ENCODE measurements at regions of chr6 and their contacts with region 1.

Region 1: GRCh38 chr6:107033126-107033525 is 5.1 kb downstream of the MTRES1 start:
- DNase-seq: no peak
- H3K4me3 Mint-ChIP-seq: no peak overlapping the region
- H3K27ac Mint-ChIP-seq: peak overlapping the region; percentile 25
- H3K4me1 Mint-ChIP-seq: peaks cover 20% of the 10 kb centered on the region
- H3K27me3 Mint-ChIP-seq: no peaks in the 10 kb centered on the region

Region 2: GRCh38 chr6:106325336-106326178 is 707.6 kb before region 1 on chr6 and contains the start of gene ATG5:
- intact Hi-C with region 1: loop called (anchors 1 kb)
- DNase-seq: peak; percentile 100
- H3K4me3 Mint-ChIP-seq: peak within 1 kb of the TSS; percentile 100
- H3K27ac Mint-ChIP-seq: peak within 1 kb of the TSS; percentile 98
- H3K4me1 Mint-ChIP-seq: peaks cover 35% of the 10 kb centered on the region
- H3K27me3 Mint-ChIP-seq: peaks cover 22% of the 10 kb centered on the region
- total RNA-seq, gene ATG5: 36.0 and 36.7 TPM in 2 replicates

Region 3: GRCh38 chr6:106629103-106629858 is 403.8 kb before region 1 on chr6 and contains the starts of genes QRSL1 and RTN4IP1:
- intact Hi-C with region 1: loop called (anchors 1 kb)
- DNase-seq: peak; percentile 84
- H3K4me3 Mint-ChIP-seq: peak within 1 kb of the TSS; percentile 95
- H3K27ac Mint-ChIP-seq: peak within 1 kb of the TSS; percentile 98
- H3K4me1 Mint-ChIP-seq: peaks cover 33% of the 10 kb centered on the region
- H3K27me3 Mint-ChIP-seq: no peaks in the 10 kb centered on the region
- total RNA-seq, gene QRSL1: 18.6 and 21.9 TPM in 2 replicates
- total RNA-seq, gene RTN4IP1: 6.4 and 6.8 TPM in 2 replicates

Region 4: DNA sequence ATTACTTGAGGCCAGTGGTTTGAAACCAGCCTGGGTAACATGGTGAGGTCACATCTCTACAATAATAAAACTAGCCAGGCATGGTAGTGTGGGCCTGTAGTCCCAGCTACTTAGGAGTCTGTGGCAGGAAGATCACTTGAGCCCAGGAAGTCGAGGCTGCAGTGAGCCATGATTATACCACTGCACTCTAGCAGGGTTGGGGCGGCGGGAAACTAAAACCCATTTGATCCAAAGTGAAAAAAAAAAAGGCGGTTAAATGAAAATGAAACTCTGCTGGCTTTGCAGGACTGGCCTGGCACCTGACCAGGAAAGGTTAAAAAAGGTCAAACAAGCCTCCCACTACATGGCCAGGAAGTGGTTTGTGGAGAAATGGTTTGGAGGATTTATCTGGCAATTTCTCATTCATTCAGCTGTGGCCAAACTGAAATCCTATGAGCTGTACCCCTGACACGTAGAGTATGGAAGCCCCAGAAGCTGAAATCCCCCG is 31.5 kb after region 1 on chr6:
- intact Hi-C with region 1: loop called (anchors 1 kb)
- DNase-seq: peak; percentile 4
- H3K4me3 Mint-ChIP-seq: no peak overlapping the region
- H3K27ac Mint-ChIP-seq: peak overlapping the region; percentile 44
- H3K4me1 Mint-ChIP-seq: peaks cover 36% of the 10 kb centered on the region
- H3K27me3 Mint-ChIP-seq: no peaks in the 10 kb centered on the region